ENCODE measurements at regions of chr5 and their contacts with region 1.

Region 1: DNA sequence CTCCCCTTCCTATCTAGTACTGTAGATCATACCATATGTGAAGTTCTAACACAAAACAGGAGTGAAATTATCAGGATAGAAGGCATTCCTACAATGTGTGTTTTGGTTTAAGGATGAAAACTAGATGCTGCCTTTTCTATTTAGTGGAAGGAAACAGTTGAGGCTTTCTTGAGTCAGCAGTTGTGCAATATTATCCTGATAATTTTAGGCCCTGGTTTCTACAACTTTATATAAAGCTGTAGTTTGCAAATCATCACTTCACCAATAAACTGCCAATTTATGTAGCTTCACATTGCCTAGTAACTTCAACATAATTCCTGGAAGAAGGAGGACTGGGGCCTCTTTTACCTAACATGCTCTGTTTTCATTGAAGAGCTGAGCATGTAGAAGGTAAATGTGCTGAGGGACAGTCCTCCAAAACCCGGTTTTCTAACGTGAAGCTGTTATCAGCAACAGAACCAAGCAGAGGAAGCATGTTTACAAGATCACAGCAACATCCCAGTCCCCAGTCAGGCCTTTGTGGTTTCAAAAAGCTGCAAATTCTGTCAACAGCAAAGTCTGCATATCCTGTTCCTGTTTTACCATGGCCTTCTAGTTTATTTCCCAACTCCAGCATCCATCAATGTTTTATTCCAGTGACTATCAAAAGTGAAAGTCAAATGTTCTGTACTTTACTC is 513.4 kb upstream of the MEF2C start:
- DNase-seq: peak; percentile 50
- ATAC-seq: peak; percentile 71
- H3K4me3 ChIP-seq: peak overlapping the region in 1 of 5 experiments; percentile 13
- H3K4me3 Mint-ChIP-seq: peak overlapping the region; percentile 70
- H3K27ac ChIP-seq: peak overlapping the region; percentile 77 to 89
- H3K27ac Mint-ChIP-seq: peak overlapping the region; percentile 92
- H3K4me1 ChIP-seq: peaks cover 37 to 49% of the 10 kb centered on the region in 2 donors
- H3K4me1 Mint-ChIP-seq: peaks cover 58% of the 10 kb centered on the region
- H3K27me3 ChIP-seq: no peaks in the 10 kb centered on the region
- H3K27me3 Mint-ChIP-seq: no peaks in the 10 kb centered on the region
- CTCF ChIP-seq: no peak

Region 2: GRCh38 chr5:89359044-89359443 is 37.4 kb before region 1 on chr5:
- CTCF ChIA-PET with region 1: no interaction called
- POLR2A ChIA-PET with region 1: no interaction called
- intact Hi-C with region 1: loop called (anchors 5 kb)
- DNase-seq: no peak
- ATAC-seq: no peak
- H3K4me3 ChIP-seq: no peak overlapping the region
- H3K4me3 Mint-ChIP-seq: no peak overlapping the region
- H3K27ac ChIP-seq: no peak overlapping the region
- H3K27ac Mint-ChIP-seq: no peak overlapping the region
- H3K4me1 ChIP-seq: peaks cover 2 to 7% of the 10 kb centered on the region in 2 donors
- H3K4me1 Mint-ChIP-seq: peaks cover 8% of the 10 kb centered on the region
- H3K27me3 ChIP-seq: no peaks in the 10 kb centered on the region
- H3K27me3 Mint-ChIP-seq: no peaks in the 10 kb centered on the region
- CTCF ChIP-seq: no peak

Region 3: GRCh38 chr5:89435347-89435746 is 38.9 kb after region 1 on chr5:
- CTCF ChIA-PET with region 1: no interaction called
- POLR2A ChIA-PET with region 1: no interaction called
- intact Hi-C with region 1: no loop called
- DNase-seq: peak; percentile 77
- ATAC-seq: peak; percentile 78
- H3K4me3 ChIP-seq: peak overlapping the region in 4 of 5 experiments; percentile 1 to 45 (median 8)
- H3K4me3 Mint-ChIP-seq: peak overlapping the region; percentile 66
- H3K27ac ChIP-seq: peak overlapping the region; percentile 81 to 89
- H3K27ac Mint-ChIP-seq: peak overlapping the region; percentile 86
- H3K4me1 ChIP-seq: peaks cover 53 to 71% of the 10 kb centered on the region in 2 donors
- H3K4me1 Mint-ChIP-seq: peaks cover 59% of the 10 kb centered on the region
- H3K27me3 ChIP-seq: no peaks in the 10 kb centered on the region
- H3K27me3 Mint-ChIP-seq: no peaks in the 10 kb centered on the region
- CTCF ChIP-seq: no peak

Region 4: DNA sequence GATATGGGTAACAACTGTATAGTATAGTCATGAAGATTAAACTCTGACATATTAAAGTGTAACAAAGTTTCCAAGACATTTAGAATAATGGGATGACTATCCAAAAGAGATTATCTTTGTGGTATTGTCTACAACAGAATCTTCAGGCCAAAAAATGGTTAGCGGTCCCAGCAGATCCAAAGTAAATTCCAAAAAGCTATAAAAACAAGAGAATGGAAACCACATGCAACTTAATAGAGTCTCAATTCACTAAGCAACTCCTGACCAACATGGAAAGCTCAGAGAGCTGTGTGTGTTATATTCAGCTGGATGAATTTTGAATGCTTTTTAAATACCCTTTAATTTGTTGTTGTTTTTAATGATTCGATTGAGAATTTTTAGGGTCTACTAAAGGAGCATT is 324.9 kb after region 1 on chr5:
- CTCF ChIA-PET with region 1: no interaction called
- POLR2A ChIA-PET with region 1: no interaction called
- intact Hi-C with region 1: no loop called
- DNase-seq: no peak
- ATAC-seq: no peak
- H3K4me3 ChIP-seq: no peak overlapping the region
- H3K4me3 Mint-ChIP-seq: no peak overlapping the region
- H3K27ac ChIP-seq: no peak overlapping the region
- H3K27ac Mint-ChIP-seq: no peak overlapping the region
- H3K4me1 ChIP-seq: no peaks in the 10 kb centered on the region
- H3K4me1 Mint-ChIP-seq: no peaks in the 10 kb centered on the region
- H3K27me3 ChIP-seq: no peaks in the 10 kb centered on the region
- H3K27me3 Mint-ChIP-seq: no peaks in the 10 kb centered on the region
- CTCF ChIP-seq: no peak

Measured in B cell (primary cell).